ENCODE measurements at regions of chr7 and their contacts with region 1.

Region 1: GRCh38 chr7:108135446-108136190 is 5.5 kb upstream of the LAMB4 start:
- DNase-seq: peak in 4 of 14 experiments; percentile 5 to 40 (median 35)
- ATAC-seq: peak; percentile 51
- H3K4me3 ChIP-seq: no peak overlapping the region
- H3K4me3 Mint-ChIP-seq: peak overlapping the region; percentile 12
- H3K27ac ChIP-seq: no peak overlapping the region
- H3K27ac Mint-ChIP-seq: peak overlapping the region; percentile 75
- H3K4me1 ChIP-seq: peaks cover 8% of the 10 kb centered on the region
- H3K4me1 Mint-ChIP-seq: peaks cover 17% of the 10 kb centered on the region
- H3K27me3 ChIP-seq: no peaks in the 10 kb centered on the region
- H3K27me3 Mint-ChIP-seq: no peaks in the 10 kb centered on the region
- CTCF ChIP-seq: no peak

Region 2: GRCh38 chr7:106806556-106806955 is 1329.1 kb before region 1 on chr7:
- CTCF ChIA-PET with region 1: no interaction called
- POLR2A ChIA-PET with region 1: no interaction called
- intact Hi-C with region 1: loop called in 1 of 2 experiments (anchors 10 kb)
- DNase-seq: no peak
- ATAC-seq: no peak
- H3K4me3 ChIP-seq: no peak overlapping the region
- H3K4me3 Mint-ChIP-seq: no peak overlapping the region
- H3K27ac ChIP-seq: no peak overlapping the region
- H3K27ac Mint-ChIP-seq: no peak overlapping the region
- H3K4me1 ChIP-seq: no peaks in the 10 kb centered on the region
- H3K4me1 Mint-ChIP-seq: no peaks in the 10 kb centered on the region
- H3K27me3 ChIP-seq: no peaks in the 10 kb centered on the region
- H3K27me3 Mint-ChIP-seq: peaks cover 3% of the 10 kb centered on the region
- CTCF ChIP-seq: no peak